AG04450 (cell line): ENCODE measurements at regions of chr7 and their contacts with region 1.

Region 1: DNA sequence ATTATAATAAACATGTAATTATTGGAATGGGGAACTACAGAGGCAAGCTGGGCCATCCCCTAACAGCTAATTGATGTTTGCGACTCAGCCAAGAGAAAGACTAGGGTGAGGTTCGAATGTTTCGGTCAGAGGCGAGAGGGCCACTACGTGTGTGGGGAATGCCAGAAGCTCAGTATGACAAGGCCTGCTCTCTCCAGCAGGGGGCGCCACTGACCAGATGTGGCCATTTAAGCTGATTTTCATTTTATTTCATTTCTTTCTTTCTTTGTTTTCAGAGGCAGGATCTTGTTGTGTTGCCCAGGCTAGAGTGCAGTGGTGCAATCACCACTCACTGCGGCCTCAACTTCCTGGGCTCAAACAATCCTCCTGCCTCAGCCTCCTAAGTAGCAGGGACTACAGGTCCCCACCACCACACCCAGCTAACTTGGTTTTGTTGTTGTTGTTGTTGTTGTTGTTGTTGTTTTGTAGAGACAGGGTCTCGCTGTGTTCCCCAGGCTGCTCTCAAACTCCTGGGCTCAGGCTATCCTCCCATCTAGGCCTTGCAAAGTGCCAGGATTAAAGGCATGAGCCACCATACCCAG is 38.1 kb downstream of the TMEM130 start:
- DNase-seq: no peak
- H3K4me3 ChIP-seq: no peak overlapping the region
- H3K27ac ChIP-seq: no peak overlapping the region
- H3K27me3 ChIP-seq: peaks cover 4% of the 10 kb centered on the region
- CTCF ChIP-seq: peak; percentile 60

Region 2: DNA sequence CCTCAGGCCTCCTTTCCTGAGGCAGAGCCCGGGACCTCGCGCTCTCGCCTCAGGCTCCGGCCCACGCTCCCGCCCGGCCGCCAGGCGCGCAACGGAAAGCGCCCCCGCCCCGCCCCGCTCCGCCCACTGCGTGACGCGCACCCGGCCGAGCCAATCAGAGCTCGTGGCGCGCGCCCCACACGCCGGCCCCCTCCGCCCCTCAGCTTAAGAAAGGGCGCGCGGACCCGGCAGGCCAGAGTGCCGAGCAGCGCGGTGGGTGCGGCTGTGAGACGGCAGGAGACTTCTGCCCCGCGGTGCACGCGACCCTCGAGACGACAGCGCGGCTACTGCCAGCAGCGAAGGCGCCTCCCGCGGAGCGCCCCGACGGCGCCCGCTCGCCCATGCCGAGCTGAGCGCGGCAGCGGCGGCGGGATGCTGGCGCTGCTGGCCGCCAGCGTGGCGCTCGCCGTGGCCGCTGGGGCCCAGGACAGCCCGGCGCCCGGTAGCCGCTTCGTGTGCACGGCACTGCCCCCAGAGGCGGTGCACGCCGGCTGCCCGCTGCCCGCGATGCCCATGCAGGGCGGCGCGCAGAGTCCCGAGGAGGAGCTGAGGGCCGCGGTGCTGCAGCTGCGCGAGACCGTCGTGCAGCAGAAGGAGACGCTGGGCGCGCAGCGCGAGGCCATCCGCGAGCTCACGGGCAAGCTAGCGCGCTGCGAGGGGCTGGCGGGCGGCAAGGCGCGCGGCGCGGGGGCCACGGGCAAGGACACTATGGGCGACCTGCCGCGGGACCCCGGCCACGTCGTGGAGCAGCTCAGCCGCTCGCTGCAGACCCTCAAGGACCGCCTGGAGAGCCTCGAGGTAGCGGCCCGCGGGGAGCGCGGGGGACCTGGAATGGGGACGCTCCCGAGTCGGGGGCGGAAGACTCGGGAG is 214.4 kb before region 1 on chr7 and contains the start of gene NPTX2:
- CTCF ChIA-PET with region 1: no interaction called
- POLR2A ChIA-PET with region 1: no interaction called
- DNase-seq: no peak
- H3K4me3 ChIP-seq: no peak within 1 kb of the TSS
- H3K27ac ChIP-seq: no peak within 1 kb of the TSS
- H3K27me3 ChIP-seq: peaks cover 7% of the 10 kb centered on the region
- CTCF ChIP-seq: no peak
- polyA plus RNA-seq, gene NPTX2: 0.02 TPM in 1 of 2 replicates, not detected in the other

Region 3: DNA sequence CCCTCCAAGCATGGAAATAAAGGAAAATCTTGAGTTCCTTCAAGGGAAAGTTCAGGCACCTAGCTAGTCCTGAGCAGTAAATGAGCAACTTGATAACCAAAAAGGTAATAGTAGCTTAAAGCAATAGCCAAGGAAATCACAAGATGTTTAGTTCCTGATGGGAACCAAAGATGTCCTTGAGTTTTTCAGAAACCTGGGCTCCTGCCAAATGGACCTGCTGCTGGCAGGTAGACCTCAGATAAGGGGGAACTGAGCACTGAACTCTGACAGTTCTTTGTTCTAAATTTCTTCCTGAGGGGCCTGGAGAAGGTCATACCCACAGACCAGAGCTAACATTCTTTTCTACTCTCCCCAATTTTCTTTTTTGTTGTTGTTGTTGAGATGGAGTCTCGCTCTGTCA is 10.4 kb before region 1 on chr7:
- CTCF ChIA-PET with region 1: interaction called, 12 read pairs
- POLR2A ChIA-PET with region 1: no interaction called
- DNase-seq: no peak
- H3K4me3 ChIP-seq: no peak overlapping the region
- H3K27ac ChIP-seq: no peak overlapping the region
- H3K27me3 ChIP-seq: no peaks in the 10 kb centered on the region
- CTCF ChIP-seq: no peak

Region 4: DNA sequence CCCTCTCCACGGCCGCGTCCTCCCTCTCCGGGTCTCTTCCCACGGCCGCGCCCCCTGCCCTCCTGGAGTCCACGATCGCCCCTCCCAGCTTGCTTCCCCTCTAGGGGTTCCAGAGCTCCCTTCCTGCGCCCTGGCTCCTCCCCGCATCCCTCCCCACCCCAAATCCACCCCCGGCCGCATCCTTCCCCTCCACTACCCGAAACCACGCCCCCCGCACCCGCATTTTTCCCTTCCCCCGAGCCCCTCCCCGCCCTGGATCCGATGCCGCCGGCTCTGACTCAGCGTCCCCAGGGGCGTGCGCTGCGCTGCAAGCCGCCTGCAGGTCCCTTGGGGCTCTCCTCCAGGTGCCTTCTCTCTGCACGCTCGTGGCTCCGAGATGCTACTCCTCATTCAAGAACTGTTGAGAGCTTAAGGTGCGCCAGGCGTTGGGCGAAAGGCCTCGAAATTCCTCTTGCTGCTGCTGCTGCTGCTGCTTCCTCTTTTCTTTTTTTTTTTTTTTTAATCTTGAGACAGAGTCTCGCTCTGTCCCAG is 38.5 kb after region 1 on chr7:
- CTCF ChIA-PET with region 1: interaction called, 11 read pairs
- POLR2A ChIA-PET with region 1: no interaction called
- DNase-seq: no peak
- H3K4me3 ChIP-seq: peak overlapping the region; percentile 64
- H3K27ac ChIP-seq: no peak overlapping the region
- H3K27me3 ChIP-seq: peaks cover 14% of the 10 kb centered on the region
- CTCF ChIP-seq: no peak